Kidney (tissue), 22 donors: ENCODE measurements at regions of chr1 and their contacts with region 1.

Region 1: GRCh38 chr1:205711104-205712020 is 31.1 kb upstream of the SLC45A3 start:
- DNase-seq: peak in 3 of 5 donors; percentile 65 to 91 (median 89)
- H3K4me3 ChIP-seq: no peak overlapping the region
- H3K27ac ChIP-seq: no peak overlapping the region
- H3K4me1 ChIP-seq: peaks cover 0 to 17% (median 9%) of the 10 kb centered on the region in 3 donors
- H3K27me3 ChIP-seq: no peaks in the 10 kb centered on the region
- CTCF ChIP-seq: peak; percentile 88

Region 2: GRCh38 chr1:205591522-205592351 is 119.6 kb before region 1 on chr1:
- intact Hi-C with region 1: no loop called
- DNase-seq: peak; percentile 90 to 94 (median 93)
- H3K4me3 ChIP-seq: peak overlapping the region; percentile 60 to 84 (median 68)
- H3K27ac ChIP-seq: peak overlapping the region; percentile 45 to 61
- H3K4me1 ChIP-seq: peaks cover 0 to 3% (median 3%) of the 10 kb centered on the region in 3 donors
- H3K27me3 ChIP-seq: no peaks in the 10 kb centered on the region
- CTCF ChIP-seq: peak; percentile 99

Region 3: GRCh38 chr1:205668951-205669340 is 42.4 kb before region 1 on chr1:
- intact Hi-C with region 1: loop called (anchors 10 kb)
- DNase-seq: peak in 2 of 5 donors; percentile 35 to 53
- H3K4me3 ChIP-seq: no peak overlapping the region
- H3K27ac ChIP-seq: no peak overlapping the region
- H3K4me1 ChIP-seq: peaks cover 2 to 49% (median 26%) of the 10 kb centered on the region in 3 donors
- H3K27me3 ChIP-seq: no peaks in the 10 kb centered on the region
- CTCF ChIP-seq: no peak